ENCODE measurements at regions of chr4 and their contacts with region 1.

Region 1: GRCh38 chr4:126658411-126658810 is 974.3 kb upstream of the INTU start:
- DNase-seq: no peak
- ATAC-seq: no peak
- H3K4me3 ChIP-seq: no peak overlapping the region
- H3K27ac ChIP-seq: no peak overlapping the region
- H3K4me1 ChIP-seq: peaks cover 0 to 6% (median 0%) of the 10 kb centered on the region in 9 donors
- H3K27me3 ChIP-seq: no peaks in the 10 kb centered on the region
- CTCF ChIP-seq: no peak

Region 2: GRCh38 chr4:126899331-126899801 is 241.0 kb after region 1 on chr4:
- intact Hi-C with region 1: loop called in 1 of 10 experiments (anchors 10 kb)
- DNase-seq: peak; percentile 10 to 50
- ATAC-seq: peak; percentile 82 to 95 (median 92)
- H3K4me3 ChIP-seq: no peak overlapping the region
- H3K27ac ChIP-seq: peak overlapping the region in 8 of 10 donors; percentile 24 to 84 (median 63)
- H3K4me1 ChIP-seq: peaks cover 0 to 15% (median 0%) of the 10 kb centered on the region in 9 donors
- H3K27me3 ChIP-seq: no peaks in the 10 kb centered on the region
- CTCF ChIP-seq: no peak